OCI-LY7 (cell line): ENCODE measurements at regions of chr5 and their contacts with region 1.

Region 1: DNA sequence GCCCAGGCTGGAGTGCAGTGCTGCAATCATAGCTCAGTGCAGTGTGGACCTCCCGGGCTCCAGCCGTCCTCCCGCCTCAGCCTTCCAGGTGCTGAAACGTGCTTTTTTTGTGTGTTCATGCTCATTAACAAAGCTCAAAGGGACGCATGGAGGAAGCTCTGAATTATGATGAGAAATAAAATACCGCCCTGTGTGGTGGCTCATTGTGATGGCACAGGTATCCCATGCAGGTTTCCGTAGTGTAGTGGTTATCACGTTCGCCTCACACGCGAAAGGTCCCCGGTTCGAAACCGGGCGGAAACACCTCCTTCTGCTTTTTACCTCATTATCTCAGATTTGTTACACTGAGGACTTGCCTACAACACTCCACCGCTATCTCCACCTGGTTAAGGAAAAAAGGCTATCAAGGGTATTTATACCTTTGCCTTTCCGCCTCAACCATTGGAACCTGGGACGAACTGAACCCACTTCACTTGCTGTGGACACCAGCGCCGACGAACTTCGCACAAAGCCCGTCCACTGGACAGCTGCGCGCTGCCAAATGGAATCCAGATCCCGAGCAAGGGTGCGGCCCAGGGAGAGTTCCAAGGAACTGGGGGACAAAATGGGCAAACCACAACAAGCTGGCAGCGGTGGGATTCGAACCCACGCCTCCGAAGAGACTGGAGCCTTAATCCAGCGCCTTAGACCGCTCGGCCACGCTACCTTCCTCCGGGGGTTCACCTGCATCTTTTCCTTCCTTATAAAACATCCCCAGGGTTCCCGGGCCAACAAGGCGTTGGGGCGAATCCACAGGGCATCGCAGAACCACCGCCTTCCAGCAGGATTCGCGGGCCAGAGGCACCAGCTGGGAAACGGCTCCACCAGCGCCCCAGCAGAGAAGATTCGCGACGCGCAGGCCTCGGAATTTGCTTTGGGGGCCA is 26.3 kb downstream of the OR2V2 start:
- DNase-seq: peak; percentile 91
- H3K4me3 ChIP-seq: peak overlapping the region; percentile 74
- H3K27ac ChIP-seq: peak overlapping the region; percentile 88
- H3K4me1 ChIP-seq: peaks cover 39% of the 10 kb centered on the region
- CTCF ChIP-seq: peak; percentile 64; the same call in 1 of the 2 replicates

Region 2: GRCh38 chr5:180802325-180803180 is 371.1 kb before region 1 on chr5 and contains the start of gene MGAT1:
- CTCF ChIA-PET with region 1: no interaction called
- POLR2A ChIA-PET with region 1: interaction called, 3 read pairs
- intact Hi-C with region 1: loop called (anchors 5 kb)
- DNase-seq: peak; percentile 75
- H3K4me3 ChIP-seq: peak within 1 kb of the TSS; percentile 84
- H3K27ac ChIP-seq: peak within 1 kb of the TSS; percentile 96
- H3K4me1 ChIP-seq: peaks cover 80% of the 10 kb centered on the region
- CTCF ChIP-seq: no peak
- total RNA-seq, gene MGAT1: 65.2 and 75.4 TPM in 2 replicates

Region 3: DNA sequence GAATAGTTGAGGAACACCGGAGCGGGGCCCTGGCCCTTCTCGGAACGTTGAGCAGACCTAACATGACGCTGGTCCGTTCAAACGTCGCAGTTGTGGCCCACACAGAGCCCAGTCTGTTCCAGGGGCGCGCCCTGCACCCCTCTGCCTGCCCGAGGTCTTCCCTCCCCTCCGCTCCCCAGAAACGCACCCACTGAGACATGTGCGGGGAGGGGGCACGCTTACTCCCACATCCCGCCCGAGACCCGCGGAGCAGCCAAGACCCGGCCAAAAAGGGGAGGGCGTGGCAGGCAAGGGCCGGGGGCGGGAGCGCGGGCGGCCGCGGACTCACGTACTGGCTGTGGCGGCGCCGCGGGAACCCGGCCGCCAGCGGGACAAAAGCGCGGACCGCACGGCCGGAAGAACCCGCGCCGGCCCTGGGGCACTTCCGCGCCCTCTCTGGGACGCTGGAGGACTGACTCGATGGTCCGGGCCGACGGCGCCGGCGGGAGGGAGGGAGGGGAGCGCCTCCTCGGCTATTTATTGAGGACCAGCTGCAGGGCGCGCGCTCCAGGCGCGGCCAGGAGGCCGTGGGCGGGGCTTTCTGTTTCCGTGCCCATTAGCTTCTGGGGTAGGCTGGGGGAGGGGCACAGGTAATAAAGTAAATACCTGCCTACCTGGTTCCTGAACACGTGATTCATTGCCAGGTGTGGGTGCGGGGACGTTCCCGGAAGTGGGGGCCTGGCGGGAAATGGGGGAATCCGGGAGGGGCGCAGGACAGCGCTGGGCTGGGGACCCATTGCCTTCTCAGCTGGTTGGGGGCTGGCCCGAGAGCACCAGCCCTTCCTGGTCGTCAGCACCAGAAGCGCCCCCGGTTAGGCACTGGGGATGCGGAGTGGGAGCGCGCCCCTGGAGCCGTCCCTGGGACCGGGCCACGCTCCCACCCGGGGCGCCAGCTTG is 312.5 kb before region 1 on chr5 and contains the start of gene ZFP62:
- CTCF ChIA-PET with region 1: interaction called, 3 read pairs
- POLR2A ChIA-PET with region 1: interaction called, 5 read pairs
- intact Hi-C with region 1: loop called (anchors 2 kb)
- DNase-seq: peak; percentile 96
- H3K4me3 ChIP-seq: peak within 1 kb of the TSS; percentile 96
- H3K27ac ChIP-seq: peak within 1 kb of the TSS; percentile 95
- H3K4me1 ChIP-seq: peaks cover 18% of the 10 kb centered on the region
- CTCF ChIP-seq: no peak
- total RNA-seq, gene ZFP62: 58.4 and 59.0 TPM in 2 replicates

Region 4: GRCh38 chr5:181159286-181159829 is 14.3 kb before region 1 on chr5:
- CTCF ChIA-PET with region 1: no interaction called
- POLR2A ChIA-PET with region 1: interaction called, 11 read pairs
- intact Hi-C with region 1: loop called (anchors 2 kb)
- DNase-seq: peak; percentile 84
- H3K4me3 ChIP-seq: no peak overlapping the region
- H3K27ac ChIP-seq: peak overlapping the region; percentile 80
- H3K4me1 ChIP-seq: peaks cover 38% of the 10 kb centered on the region
- CTCF ChIP-seq: peak; percentile 95

Region 5: GRCh38 chr5:181191529-181192394 is 18.1 kb after region 1 on chr5:
- CTCF ChIA-PET with region 1: interaction called, 3 read pairs
- POLR2A ChIA-PET with region 1: interaction called, 19 read pairs
- intact Hi-C with region 1: loop called (anchors 1 kb)
- DNase-seq: peak; percentile 96
- H3K4me3 ChIP-seq: peak overlapping the region; percentile 69
- H3K27ac ChIP-seq: peak overlapping the region; percentile 82
- H3K4me1 ChIP-seq: peaks cover 24% of the 10 kb centered on the region
- CTCF ChIP-seq: no peak